Right ventricle myocardium inferior (tissue), 1 donor: ENCODE measurements at regions of chr3 and their contacts with region 1.

Region 1: GRCh38 chr3:72447059-72447946 is 400.9 kb downstream of the SHQ1 start:
- DNase-seq: peak; percentile 96
- ATAC-seq: peak; percentile 98

Region 2: DNA sequence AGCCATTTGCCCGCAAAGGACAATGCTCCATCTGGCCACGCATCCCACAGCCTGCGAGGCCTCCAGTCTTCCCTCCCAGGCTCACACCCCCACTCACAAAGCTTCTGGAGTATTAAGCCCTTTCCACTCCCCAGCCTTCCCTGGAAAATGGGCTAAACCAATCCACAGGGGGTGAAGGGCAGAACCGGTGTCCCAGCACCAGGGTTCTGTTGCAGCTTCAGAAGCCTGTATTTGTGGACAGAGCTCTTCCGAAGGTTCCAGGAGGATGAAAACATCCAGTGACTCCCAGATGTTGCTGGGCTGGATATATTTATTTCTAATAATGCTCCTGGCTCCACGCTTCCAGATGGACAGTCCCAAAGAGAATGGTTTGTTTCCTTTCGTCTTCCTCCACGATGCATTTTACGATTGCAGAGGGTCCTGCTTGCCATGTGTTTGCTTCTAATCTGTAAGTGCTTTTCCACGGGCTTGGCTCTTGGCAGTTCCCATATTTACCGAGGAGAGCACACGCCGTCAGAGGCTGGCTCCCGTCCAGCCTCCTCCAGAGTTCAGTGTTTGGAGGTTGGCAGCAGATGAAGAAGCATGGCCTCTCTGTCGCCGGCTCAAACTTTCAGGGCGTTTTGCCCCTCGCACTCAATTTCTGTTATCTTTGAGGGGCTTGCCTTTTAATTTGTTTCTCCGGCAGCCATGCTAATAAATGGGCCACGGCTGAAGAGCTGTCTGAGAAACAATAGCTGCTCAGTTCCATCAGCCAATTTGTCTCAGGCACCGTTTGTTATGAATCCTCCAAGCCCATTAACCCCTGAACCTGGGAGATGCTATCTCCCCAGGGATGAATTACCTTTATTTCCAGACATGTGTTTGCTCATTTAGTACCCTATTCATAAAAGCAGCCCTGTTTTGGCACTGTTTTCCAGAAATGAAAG is 294.5 kb before region 1 on chr3:
- intact Hi-C with region 1: loop called (anchors 10 kb)
- DNase-seq: peak; percentile 84
- ATAC-seq: peak; percentile 67

Region 3: DNA sequence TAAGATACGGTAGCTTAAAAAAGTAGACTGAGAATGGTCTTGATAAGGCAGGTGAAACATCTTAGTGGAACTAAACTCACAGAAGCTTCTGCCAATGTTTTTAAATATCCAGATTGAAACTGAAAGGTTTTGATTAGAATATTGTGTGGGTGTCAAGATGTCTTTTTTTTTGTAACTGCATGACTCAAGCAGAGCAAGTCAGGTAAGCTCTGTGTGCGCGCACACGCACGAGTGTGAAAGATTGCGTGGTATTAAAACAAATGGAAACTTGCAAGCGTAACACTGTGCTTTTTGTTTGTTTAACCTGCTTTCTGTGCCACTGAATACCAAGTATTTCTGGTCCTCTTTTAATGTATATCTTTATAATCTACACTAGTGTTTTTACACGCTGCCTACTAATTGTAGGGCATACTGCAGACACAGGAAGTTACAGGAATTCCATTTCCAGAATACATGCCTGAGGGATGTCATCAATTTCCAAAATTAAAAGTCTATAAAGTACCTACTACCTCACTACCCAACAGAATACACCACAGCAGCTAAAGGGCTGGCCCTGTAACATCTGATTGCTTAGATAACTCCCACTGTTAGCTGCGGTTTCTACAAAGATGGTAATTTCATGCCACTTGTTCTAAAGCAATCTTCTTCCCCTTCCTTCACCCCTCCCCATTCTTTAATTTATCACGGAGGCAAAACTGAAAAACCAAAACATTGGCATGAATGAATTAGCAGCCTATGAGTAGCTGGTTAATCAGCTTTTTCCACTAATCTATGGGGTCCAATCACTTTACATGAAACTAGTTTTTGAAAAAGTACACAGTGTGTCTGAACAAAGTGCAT is 71.8 kb before region 1 on chr3:
- intact Hi-C with region 1: no loop called
- DNase-seq: no peak
- ATAC-seq: no peak

Region 4: DNA sequence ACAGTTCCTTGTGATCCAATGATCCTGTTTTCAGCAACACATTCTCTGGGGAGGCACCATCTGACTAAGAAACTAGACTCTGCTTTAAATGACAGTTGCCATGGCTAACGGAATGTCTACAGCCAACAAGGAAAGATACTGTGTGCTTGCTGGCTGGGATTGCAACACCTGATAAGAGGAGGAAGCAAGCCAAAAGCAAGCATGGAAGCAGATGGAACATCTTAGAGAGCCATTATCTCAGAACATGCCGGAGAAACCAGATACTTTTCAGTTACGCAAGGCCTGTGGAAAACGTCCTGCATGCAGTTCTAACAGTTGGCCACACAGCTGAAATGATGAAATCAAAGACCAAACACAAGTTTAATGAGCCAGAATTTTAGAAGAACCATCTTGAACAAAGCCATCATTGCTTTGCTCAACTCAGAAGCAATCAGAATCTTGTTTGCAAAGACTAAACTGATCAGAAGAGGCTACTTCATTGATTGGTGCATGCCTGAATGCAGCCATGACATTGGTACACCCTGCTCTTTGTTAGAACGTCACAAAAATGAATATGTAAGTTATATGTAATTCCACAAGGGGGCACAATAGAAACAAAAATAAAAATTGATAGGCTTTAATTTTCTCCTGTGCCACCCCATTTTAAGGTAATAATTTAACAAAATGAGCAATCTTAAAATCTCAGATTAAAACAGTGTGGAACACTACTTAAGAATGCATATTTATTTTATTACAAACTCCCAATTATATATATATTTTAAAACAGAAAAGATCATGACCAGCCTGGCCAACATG is 491.4 kb after region 1 on chr3:
- intact Hi-C with region 1: no loop called
- DNase-seq: no peak
- ATAC-seq: peak; percentile 95